ENCODE measurements at regions of chr1 and their contacts with region 1.

Region 1: DNA sequence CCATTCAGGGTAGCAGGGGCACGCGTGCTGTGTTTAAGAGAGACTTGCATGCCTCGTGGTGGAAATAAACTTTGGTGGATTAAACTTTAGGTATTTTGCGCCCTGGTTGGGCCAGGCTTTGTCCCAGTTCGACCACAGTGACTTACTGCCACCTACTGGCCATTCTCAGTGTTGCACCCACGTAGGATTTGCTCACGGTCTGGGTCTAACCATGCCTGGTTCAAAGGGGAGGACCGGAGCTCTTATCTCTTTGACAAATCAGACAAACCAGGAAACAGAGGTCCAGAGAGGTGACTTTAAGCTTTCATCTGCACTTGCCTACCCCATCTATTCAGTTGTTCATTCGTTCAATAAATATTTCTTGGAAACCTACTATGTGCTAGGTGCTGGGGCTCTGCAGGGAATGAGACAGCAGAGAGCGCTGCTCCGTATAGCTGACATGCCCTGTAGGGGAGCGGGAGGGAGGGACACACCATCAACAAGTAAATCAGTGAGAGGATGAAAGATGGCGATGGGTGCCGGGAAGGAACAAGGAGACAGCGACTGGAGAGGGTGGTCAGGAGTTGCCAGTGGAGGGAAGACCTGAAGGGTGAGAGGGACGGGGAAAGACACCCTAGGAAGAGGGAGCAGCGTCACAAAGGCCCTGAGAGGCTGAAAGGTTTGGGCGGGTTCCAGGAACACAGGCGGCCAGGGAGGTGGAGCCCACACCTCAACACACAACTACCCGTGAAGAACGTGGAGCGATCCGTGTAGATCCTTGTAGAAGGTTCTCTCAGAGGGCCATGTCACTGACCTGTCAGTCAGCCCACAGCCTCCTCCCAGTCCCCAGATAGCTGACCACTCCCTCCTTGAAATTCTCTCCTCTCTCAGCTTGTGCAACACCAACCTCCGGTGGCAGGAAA is 27.2 kb upstream of the TINAGL1 start:
- DNase-seq: peak; percentile 82
- ATAC-seq: peak; percentile 99
- H3K4me3 ChIP-seq: no peak overlapping the region
- H3K27ac ChIP-seq: no peak overlapping the region
- H3K4me1 ChIP-seq: peaks cover 5% of the 10 kb centered on the region
- H3K27me3 ChIP-seq: peaks cover 13% of the 10 kb centered on the region
- CTCF ChIP-seq: peak; percentile 95
- POLR2A ChIP-seq: no peak
- RAD21 ChIP-seq: peak; percentile 95

Region 2: GRCh38 chr1:31216016-31216415 is 333.1 kb before region 1 on chr1:
- CTCF ChIA-PET with region 1: no interaction called
- POLR2A ChIA-PET with region 1: no interaction called
- dilution Hi-C with region 1: no loop called
- in situ Hi-C with region 1: no loop called
- intact Hi-C with region 1: no loop called
- DNase-seq: peak; percentile 17
- ATAC-seq: no peak
- H3K4me3 ChIP-seq: no peak overlapping the region
- H3K27ac ChIP-seq: no peak overlapping the region
- H3K4me1 ChIP-seq: no peaks in the 10 kb centered on the region
- H3K27me3 ChIP-seq: peaks cover 25% of the 10 kb centered on the region
- CTCF ChIP-seq: no peak
- POLR2A ChIP-seq: no peak
- RAD21 ChIP-seq: no peak

Region 3: GRCh38 chr1:31394628-31395193 is 154.4 kb before region 1 on chr1:
- CTCF ChIA-PET with region 1: interaction called, 15 read pairs
- POLR2A ChIA-PET with region 1: no interaction called
- dilution Hi-C with region 1: no loop called
- in situ Hi-C with region 1: no loop called
- intact Hi-C with region 1: loop called (anchors 1 kb)
- DNase-seq: peak; percentile 75
- ATAC-seq: peak; percentile 92
- H3K4me3 ChIP-seq: no peak overlapping the region
- H3K27ac ChIP-seq: no peak overlapping the region
- H3K4me1 ChIP-seq: peaks cover 14% of the 10 kb centered on the region
- H3K27me3 ChIP-seq: peaks cover under 1% of the 10 kb centered on the region; the same call in 1 of the 2 replicates
- CTCF ChIP-seq: peak; percentile 96
- POLR2A ChIP-seq: no peak
- RAD21 ChIP-seq: peak; percentile 87

Region 4: DNA sequence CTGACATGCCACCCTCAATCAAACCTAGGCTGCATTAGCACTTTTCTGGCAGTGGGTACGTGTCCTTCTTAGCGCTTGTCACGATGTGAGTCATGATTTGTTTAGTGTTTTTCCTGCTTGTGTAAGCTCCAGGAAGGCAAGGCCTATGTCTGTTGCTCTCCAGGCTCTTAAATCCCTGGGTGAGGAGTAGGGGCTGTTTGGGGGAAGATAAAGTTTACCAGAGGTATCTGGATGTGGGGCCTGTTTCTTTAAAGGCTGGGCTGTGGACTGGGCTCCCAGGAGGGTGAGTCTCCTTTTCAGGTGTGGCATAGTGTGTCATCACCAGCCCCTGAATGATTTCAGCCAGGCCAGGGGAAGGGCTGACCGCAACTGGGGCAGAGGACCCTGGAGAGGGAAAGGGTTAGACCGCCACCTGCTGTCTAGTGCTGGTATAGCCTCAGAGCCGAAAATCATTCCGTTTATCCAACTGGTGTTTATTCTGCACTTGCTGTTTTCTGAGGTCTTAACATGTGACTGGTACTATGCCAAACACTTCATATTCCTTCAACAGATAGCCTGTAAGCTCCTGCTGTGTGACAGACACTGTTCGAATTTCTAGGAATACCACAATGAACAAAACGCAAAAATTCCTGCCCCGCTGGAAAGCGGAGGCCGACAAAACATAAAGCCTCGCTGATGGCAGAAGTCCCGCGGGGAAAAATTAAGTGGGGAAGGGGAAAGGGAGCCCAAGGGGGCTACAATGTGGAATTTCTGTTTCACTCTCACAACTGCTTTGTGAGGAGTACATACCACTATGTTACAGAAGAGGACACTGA is 126.4 kb before region 1 on chr1:
- CTCF ChIA-PET with region 1: interaction called, 3 read pairs
- POLR2A ChIA-PET with region 1: no interaction called
- dilution Hi-C with region 1: no loop called
- in situ Hi-C with region 1: no loop called
- intact Hi-C with region 1: loop called (anchors 1 kb)
- DNase-seq: peak; percentile 90
- ATAC-seq: peak; percentile 94
- H3K4me3 ChIP-seq: no peak overlapping the region
- H3K27ac ChIP-seq: peak overlapping the region; percentile 24; the same call in 1 of the 2 replicates
- H3K4me1 ChIP-seq: peaks cover 10% of the 10 kb centered on the region
- H3K27me3 ChIP-seq: no peaks in the 10 kb centered on the region
- CTCF ChIP-seq: peak; percentile 94
- POLR2A ChIP-seq: no peak
- RAD21 ChIP-seq: peak; percentile 97

Region 5: DNA sequence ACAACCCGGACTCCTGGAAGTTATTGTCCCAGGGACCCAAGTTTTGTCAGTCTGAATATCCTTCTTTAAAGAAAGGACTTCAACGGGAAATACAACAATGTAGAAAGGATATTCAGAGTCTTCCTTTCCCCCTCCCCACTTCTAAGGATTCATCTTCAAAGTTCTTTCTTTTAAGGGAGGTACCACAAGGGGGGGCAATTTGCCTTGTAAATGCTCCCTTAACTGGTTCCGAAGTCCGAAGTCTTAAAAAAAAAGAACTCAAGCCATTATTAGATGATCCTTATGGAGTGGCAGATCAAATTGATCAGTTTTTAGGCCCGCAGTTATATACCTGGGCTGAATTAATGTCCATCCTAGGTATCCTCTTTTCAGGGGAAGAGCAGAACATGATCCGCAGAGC is 89.1 kb before region 1 on chr1:
- CTCF ChIA-PET with region 1: no interaction called
- POLR2A ChIA-PET with region 1: no interaction called
- dilution Hi-C with region 1: no loop called
- in situ Hi-C with region 1: no loop called
- intact Hi-C with region 1: loop called (anchors 1 kb)
- DNase-seq: peak; percentile 28
- ATAC-seq: no peak
- H3K4me3 ChIP-seq: no peak overlapping the region
- H3K27ac ChIP-seq: no peak overlapping the region
- H3K4me1 ChIP-seq: no peaks in the 10 kb centered on the region
- H3K27me3 ChIP-seq: peaks cover 31% of the 10 kb centered on the region
- CTCF ChIP-seq: peak; percentile 43
- POLR2A ChIP-seq: no peak
- RAD21 ChIP-seq: peak; percentile 54